SK-N-SH (cell line): ENCODE measurements at regions of chr3 and their contacts with region 1.

Region 1: DNA sequence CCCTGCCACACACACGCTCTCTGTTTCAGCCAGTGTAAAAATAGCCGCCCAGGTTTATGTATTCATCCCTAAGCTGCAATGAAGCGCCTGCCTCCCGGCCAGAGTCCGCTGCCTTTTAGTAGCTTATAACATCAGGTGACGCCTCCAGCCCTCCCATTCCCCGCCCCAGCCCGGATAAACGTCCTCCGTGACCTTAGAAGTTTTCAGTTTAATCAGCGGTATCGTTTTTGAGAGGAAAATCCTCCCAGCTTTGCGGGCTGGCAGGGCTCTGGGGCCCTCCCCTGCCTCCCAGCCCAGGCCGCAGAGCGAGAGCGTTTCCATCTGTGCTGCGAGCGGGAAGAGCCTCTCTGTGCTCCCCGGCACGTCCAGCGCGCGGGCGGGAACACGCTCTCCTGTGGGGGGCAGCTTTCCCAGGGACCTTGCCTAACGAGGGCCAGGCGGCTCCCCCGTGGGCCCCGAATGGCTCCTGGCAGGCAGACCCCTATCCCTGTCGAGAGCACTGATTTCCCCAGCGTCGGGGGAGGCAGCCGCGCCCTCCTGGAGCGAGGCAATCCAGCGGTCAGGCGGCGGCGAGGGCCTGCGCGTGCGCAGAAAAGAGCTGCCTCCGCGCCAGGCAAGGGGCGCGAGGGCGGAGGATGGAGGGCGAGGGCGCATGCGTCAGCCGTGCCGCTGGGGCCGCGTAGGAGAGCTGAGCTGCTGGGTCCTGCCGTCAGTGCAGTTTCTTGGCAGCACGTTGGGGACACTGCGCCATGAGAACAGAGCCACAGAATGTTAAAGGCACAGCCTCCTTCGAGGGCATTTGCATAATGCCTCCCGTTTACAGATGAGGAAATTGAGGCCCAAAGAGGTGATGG is 71.1 kb downstream of the CCNL1 start:
- DNase-seq: peak; percentile 99
- H3K4me3 ChIP-seq: peak overlapping the region; percentile 67 to 71
- H3K27ac ChIP-seq: peak overlapping the region; percentile 95 to 99
- H3K4me1 ChIP-seq: peaks cover 15 to 31% of the 10 kb centered on the region in 2 experiments
- H3K27me3 ChIP-seq: no peaks in the 10 kb centered on the region
- CTCF ChIP-seq: no peak; the same call in none of the 2 replicates
- EP300 ChIP-seq: peak in 1 of 2 experiments; percentile 30; a peak in 1 of 4 replicates
- RAD21 ChIP-seq: no peak

Region 2: GRCh38 chr3:156554842-156555687 is 533.8 kb before region 1 on chr3 and contains the start of gene SSR3:
- CTCF ChIA-PET with region 1: interaction called, 4 read pairs
- POLR2A ChIA-PET with region 1: interaction called, 16 read pairs
- DNase-seq: peak; percentile 92
- H3K4me3 ChIP-seq: peak within 1 kb of the TSS; percentile 92 to 94
- H3K27ac ChIP-seq: peak within 1 kb of the TSS; percentile 89 to 94
- H3K4me1 ChIP-seq: peaks cover 25 to 31% of the 10 kb centered on the region in 2 experiments
- H3K27me3 ChIP-seq: no peaks in the 10 kb centered on the region
- CTCF ChIP-seq: no peak
- EP300 ChIP-seq: peak in 1 of 2 experiments; percentile 27; a peak in 1 of 4 replicates
- RAD21 ChIP-seq: no peak
- polyA plus RNA-seq, gene SSR3: 61.7 and 96.1 TPM in 2 replicates

Region 3: GRCh38 chr3:157099326-157100095 is 10.7 kb after region 1 on chr3:
- CTCF ChIA-PET with region 1: no interaction called
- POLR2A ChIA-PET with region 1: interaction called, 11 read pairs
- DNase-seq: no peak
- H3K4me3 ChIP-seq: no peak overlapping the region
- H3K27ac ChIP-seq: no peak overlapping the region
- H3K4me1 ChIP-seq: peaks cover 4 to 10% of the 10 kb centered on the region in 2 experiments; a peak in 2 of 4 replicates
- H3K27me3 ChIP-seq: no peaks in the 10 kb centered on the region
- CTCF ChIP-seq: no peak
- EP300 ChIP-seq: no peak
- RAD21 ChIP-seq: no peak

Region 4: DNA sequence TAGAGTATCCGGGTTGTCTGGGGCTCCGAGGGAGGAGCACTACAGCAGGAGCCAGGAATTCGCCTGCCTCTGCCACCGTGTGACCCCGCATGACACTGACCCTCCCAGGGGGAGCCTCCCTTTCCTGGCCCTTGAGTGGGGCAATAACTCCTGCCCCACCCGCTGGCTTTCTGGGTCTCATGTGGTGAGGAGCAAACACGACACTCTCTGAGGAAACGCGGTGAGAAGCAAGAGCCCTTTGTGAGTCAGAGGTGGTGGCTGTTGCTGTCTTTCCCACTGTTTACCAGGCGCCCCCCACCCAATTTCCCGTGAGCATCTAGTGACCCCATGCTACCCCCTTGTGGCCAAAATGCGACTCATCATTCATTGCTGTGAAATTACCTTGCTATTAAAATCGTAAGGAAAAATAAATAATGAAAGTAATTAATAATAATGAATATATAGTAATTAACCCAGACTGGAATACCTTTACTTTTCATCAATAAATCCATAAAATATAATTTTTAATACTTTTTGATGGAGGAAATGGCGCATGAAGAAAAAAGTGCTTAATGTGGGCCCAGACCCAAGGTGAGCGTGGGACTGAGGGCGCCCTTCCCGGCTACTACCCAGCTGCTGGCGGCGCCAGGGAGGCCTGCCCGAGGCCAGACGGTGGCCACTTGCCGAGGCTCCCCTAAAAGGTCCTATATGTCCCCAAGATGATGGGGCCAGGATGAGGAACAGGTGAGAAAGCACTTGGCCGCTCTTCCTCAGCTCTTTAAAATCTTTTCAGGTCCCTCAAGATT is 41.8 kb after region 1 on chr3:
- CTCF ChIA-PET with region 1: interaction called, 40 read pairs
- POLR2A ChIA-PET with region 1: interaction called, 3 read pairs
- DNase-seq: peak; percentile 77
- H3K4me3 ChIP-seq: no peak overlapping the region
- H3K27ac ChIP-seq: peak overlapping the region in 1 of 2 experiments; percentile 80; a peak in 1 of 4 replicates
- H3K4me1 ChIP-seq: peaks cover 12 to 68% of the 10 kb centered on the region in 2 experiments; a peak in 3 of 4 replicates
- H3K27me3 ChIP-seq: no peaks in the 10 kb centered on the region
- CTCF ChIP-seq: peak; percentile 68
- EP300 ChIP-seq: no peak
- RAD21 ChIP-seq: peak; percentile 79